Mucosa of descending colon (tissue), 3 donors: ENCODE measurements at regions of chr2 and their contacts with region 1.

Region 1: GRCh38 chr2:239756790-239757760 is 268.1 kb downstream of the NDUFA10 start:
- DNase-seq: no peak
- ATAC-seq: no peak
- H3K4me3 ChIP-seq: no peak overlapping the region
- H3K4me1 ChIP-seq: no peaks in the 10 kb centered on the region
- CTCF ChIP-seq: no peak

Region 2: GRCh38 chr2:239727376-239728210 is 29.5 kb before region 1 on chr2:
- intact Hi-C with region 1: loop called in 1 of 2 experiments (anchors 2 kb)
- DNase-seq: peak in 1 of 3 donors; percentile 34
- ATAC-seq: no peak
- H3K4me3 ChIP-seq: no peak overlapping the region
- H3K4me1 ChIP-seq: no peaks in the 10 kb centered on the region
- CTCF ChIP-seq: no peak